Activated B cell treated with CpG ODN at 0.5 μM for 24 hours (primary cell): ENCODE measurements at regions of chr6 and their contacts with region 1.

Region 1: DNA sequence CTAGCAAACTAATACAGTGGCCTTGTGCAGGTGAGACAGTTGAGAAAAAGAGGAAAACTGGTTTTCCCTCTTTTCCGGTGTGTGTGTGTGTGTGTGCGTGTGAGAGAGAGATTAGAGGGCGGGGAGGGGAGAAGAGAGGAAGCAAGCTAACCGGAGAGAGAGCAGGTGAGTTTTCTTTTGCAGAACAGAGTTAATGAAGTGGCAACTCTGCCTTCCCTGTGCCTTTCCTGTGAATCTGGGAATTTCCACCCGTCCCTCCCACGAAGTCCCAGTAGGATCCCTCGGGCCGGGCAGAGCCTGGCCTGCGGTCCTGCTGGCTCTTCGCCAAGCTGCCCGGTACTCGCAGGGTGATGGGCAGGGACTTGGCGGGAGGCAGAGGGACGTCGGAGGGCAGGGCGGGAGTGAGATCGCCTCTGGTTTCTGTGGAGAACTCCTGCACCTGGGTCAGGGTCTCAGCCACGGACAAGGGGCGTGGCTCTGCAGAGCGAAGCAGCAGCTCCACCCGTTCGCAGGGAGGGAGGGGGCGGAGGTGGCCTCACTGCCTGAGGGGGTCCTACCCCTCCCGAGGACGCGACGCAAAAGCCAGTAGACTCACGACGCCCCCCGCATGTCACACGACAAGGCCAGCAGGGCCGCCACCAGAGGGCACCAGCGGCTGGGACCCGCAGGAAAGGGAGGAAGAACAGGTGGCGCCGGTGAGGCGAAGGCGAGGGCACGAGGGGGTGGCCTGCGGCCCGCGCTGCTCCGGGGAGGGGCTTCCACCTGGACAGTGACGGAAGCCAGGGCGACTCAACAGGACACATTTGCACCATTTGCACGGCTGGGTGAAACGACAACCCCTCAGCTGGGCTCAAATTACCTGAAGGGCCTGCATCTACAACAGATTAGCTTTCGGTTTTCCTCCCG is 51.2 kb upstream of the RNF182 start:
- DNase-seq: peak; percentile 74
- ATAC-seq: peak; percentile 87
- H3K4me3 Mint-ChIP-seq: peak overlapping the region; percentile 77
- H3K27ac Mint-ChIP-seq: no peak overlapping the region
- H3K4me1 Mint-ChIP-seq: peaks cover 20% of the 10 kb centered on the region
- H3K27me3 Mint-ChIP-seq: peaks cover 2% of the 10 kb centered on the region
- CTCF ChIP-seq: peak; percentile 80

Region 2: DNA sequence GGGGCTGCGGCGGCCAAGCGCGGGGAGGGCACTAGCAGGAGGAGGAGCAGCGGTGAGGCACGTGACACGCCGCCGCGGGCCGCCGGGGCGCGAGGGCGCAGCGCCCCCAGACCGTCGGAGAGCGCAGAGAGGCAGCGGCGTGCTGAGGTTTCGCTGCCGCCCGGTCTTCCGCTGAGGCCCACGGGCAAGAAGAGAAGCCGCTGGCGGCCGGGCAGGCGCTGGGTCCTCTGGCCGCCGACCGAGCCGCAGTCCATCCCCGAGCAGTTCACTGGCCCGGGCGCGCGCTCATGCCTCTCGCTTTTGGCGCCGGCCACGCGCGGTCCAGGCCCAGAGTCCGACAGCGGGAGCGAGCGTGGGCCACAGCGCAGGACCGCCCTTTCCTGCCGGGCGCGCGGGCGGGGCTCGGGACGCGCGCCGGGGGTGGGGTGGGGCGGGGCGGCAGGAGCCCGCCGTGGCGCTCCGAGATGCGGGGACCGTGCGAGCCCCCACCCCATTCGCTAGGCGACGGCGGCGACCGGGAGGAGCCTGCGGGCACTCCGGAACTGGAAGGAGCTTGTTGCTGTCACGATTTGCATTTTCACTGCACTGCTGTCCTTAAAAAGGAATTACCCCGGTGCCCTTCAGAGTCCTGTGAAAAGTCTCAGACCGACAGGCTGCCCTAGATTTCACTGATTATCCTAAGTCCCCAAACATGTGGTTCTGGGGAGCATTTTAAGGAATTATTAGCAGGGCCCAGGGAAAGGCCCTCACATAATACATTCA is 59.2 kb before region 1 on chr6 and contains the start of gene MCUR1:
- CTCF ChIA-PET with region 1: no interaction called
- POLR2A ChIA-PET with region 1: no interaction called
- intact Hi-C with region 1: loop called (anchors 2 kb)
- DNase-seq: peak; percentile 81
- ATAC-seq: peak; percentile 83
- H3K4me3 Mint-ChIP-seq: peak within 1 kb of the TSS; percentile 91
- H3K27ac Mint-ChIP-seq: peak within 1 kb of the TSS; percentile 87
- H3K4me1 Mint-ChIP-seq: peaks cover 32% of the 10 kb centered on the region
- H3K27me3 Mint-ChIP-seq: no peaks in the 10 kb centered on the region
- CTCF ChIP-seq: no peak
- total RNA-seq, gene MCUR1: 13.6 and 14.1 TPM in 2 replicates

Region 3: GRCh38 chr6:14144678-14145113 is 271.2 kb after region 1 on chr6:
- CTCF ChIA-PET with region 1: interaction called, 6 read pairs
- POLR2A ChIA-PET with region 1: no interaction called
- intact Hi-C with region 1: loop called (anchors 1 kb)
- DNase-seq: peak; percentile 63
- ATAC-seq: peak; percentile 84
- H3K4me3 Mint-ChIP-seq: peak overlapping the region; percentile 20
- H3K27ac Mint-ChIP-seq: peak overlapping the region; percentile 62
- H3K4me1 Mint-ChIP-seq: peaks cover 42% of the 10 kb centered on the region
- H3K27me3 Mint-ChIP-seq: no peaks in the 10 kb centered on the region
- CTCF ChIP-seq: peak; percentile 57